Tibial artery (tissue), 4 donors: ENCODE measurements at regions of chr6 and their contacts with region 1.

Region 1: GRCh38 chr6:111478749-111479148 is 4.3 kb downstream of the REV3L start:
- DNase-seq: no peak
- H3K4me3 ChIP-seq: no peak overlapping the region
- H3K27ac ChIP-seq: peak overlapping the region in 1 of 2 donors; percentile 34
- H3K4me1 ChIP-seq: peaks cover 0 to 65% (median 20%) of the 10 kb centered on the region in 4 donors
- H3K27me3 ChIP-seq: no peaks in the 10 kb centered on the region
- CTCF ChIP-seq: peak in 1 of 2 experiments; percentile 27

Region 2: GRCh38 chr6:111377558-111378120 is 101.1 kb before region 1 on chr6:
- intact Hi-C with region 1: loop called (anchors 10 kb)
- DNase-seq: no peak
- H3K4me3 ChIP-seq: no peak overlapping the region
- H3K27ac ChIP-seq: no peak overlapping the region
- H3K4me1 ChIP-seq: peaks cover 0 to 23% (median 11%) of the 10 kb centered on the region in 4 donors
- H3K27me3 ChIP-seq: no peaks in the 10 kb centered on the region
- CTCF ChIP-seq: no peak